Left cardiac atrium (tissue), 4 donors: ENCODE measurements at regions of chr15 and their contacts with region 1.

Region 1: GRCh38 chr15:89814112-89814742 is 425 bp downstream of the ANPEP start:
- DNase-seq: no peak
- ATAC-seq: peak; percentile 27 to 38

Region 2: GRCh38 chr15:89792106-89792805 is 22.0 kb before region 1 on chr15:
- intact Hi-C with region 1: loop called in 1 of 2 experiments (anchors 2 kb)
- DNase-seq: no peak
- ATAC-seq: no peak